B cell (primary cell): ENCODE measurements at regions of chr2 and their contacts with region 1.

Region 1: DNA sequence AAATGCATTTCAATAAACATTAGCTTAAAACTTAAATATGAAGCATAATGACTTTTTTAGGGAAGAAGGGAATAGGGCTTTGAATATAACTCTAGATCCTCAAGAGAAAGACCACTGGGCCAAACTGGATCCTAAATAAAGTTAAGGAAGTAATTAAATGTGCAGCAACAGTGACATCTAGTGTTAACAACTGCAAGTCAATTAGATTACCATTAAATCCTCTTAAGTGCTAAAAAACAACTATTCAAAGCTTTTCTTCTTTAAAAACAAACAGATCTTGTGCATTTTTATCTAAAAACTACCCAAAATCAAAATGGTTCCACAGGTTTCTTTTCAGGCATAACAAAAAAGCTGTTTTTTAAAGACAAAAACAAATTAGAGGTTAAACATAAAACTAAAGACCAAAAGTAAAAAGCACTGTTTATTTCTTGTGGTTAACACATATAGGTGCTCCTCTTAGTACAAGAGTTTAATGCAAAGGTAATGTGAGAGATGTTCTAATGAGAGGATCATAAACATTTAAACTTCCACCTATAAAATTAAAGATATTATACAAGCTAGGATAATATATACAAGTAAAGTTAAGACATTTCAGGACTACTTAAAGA is 111.4 kb downstream of the THADA start:
- DNase-seq: peak; percentile 80
- ATAC-seq: peak; percentile 54
- H3K4me3 ChIP-seq: no peak overlapping the region
- H3K4me3 Mint-ChIP-seq: no peak overlapping the region
- H3K27ac ChIP-seq: no peak overlapping the region
- H3K27ac Mint-ChIP-seq: no peak overlapping the region
- H3K4me1 ChIP-seq: peaks cover 21 to 24% of the 10 kb centered on the region in 2 donors
- H3K4me1 Mint-ChIP-seq: peaks cover 27% of the 10 kb centered on the region
- H3K27me3 ChIP-seq: no peaks in the 10 kb centered on the region
- H3K27me3 Mint-ChIP-seq: no peaks in the 10 kb centered on the region
- CTCF ChIP-seq: peak; percentile 93

Region 2: DNA sequence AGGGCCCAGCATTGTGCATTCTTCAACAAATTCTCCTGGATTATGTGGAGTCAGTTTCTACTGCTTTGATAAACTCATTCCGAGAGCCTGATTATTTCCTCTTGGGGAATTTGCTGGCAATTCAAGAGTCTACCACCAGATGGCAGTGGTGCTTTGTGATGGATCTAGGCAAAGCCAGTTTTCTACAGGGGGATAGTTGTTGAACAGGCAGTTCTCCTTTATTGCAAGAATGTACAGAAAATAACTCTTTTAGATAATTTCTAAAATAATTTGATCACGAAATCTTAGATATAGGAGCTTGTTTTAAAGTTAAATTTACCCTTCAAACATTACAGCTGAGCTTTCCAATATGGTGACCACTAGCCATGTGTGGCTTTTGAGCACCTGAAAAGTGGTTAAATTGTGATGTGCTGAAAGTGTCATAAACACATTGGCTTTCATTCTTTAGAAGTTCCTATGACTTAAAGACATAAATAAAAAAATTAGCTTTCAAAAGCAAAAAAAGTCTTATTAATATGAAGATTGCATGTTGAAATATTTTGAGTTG is 625.3 kb before region 1 on chr2:
- CTCF ChIA-PET with region 1: interaction called, 57 read pairs
- POLR2A ChIA-PET with region 1: no interaction called
- intact Hi-C with region 1: loop called (anchors 1 kb)
- DNase-seq: peak; percentile 72
- ATAC-seq: peak; percentile 53
- H3K4me3 ChIP-seq: no peak overlapping the region
- H3K4me3 Mint-ChIP-seq: no peak overlapping the region
- H3K27ac ChIP-seq: no peak overlapping the region
- H3K27ac Mint-ChIP-seq: no peak overlapping the region
- H3K4me1 ChIP-seq: no peaks in the 10 kb centered on the region
- H3K4me1 Mint-ChIP-seq: no peaks in the 10 kb centered on the region
- H3K27me3 ChIP-seq: no peaks in the 10 kb centered on the region
- H3K27me3 Mint-ChIP-seq: peaks cover 3% of the 10 kb centered on the region
- CTCF ChIP-seq: peak; percentile 92

Region 3: DNA sequence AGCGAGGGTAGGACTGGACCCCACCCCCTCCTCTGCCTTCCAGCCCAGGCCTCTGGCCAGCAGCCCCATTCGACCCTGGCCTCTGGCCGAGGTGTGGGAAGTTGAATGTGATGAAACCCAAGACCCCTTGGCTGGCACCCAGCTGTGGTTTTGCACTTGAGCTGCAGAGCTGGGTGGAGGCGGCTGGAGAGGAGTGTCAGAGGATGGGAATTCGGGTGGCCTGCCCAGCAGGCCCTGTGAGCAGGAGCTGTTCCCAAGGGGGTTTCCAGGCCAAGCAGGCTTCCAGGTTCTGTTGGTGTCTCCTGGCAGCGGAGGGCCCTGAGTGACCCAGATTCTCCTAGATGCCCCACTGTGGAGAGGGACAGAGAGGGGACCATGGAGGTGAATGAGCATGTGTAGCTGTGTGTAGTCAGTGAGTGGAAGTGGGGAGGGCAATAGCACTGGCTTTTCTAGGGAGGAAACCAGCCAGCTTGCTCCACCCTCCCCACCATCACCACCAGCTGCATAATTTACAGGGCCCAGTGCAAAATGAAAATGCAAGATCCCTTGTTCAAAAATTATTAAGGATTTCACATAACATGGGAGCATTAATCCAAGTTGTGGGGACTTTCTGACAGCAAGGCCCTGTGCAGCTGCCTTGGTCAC is 519.9 kb before region 1 on chr2:
- CTCF ChIA-PET with region 1: interaction called, 19 read pairs
- POLR2A ChIA-PET with region 1: no interaction called
- intact Hi-C with region 1: no loop called
- DNase-seq: no peak
- ATAC-seq: no peak
- H3K4me3 ChIP-seq: no peak overlapping the region
- H3K4me3 Mint-ChIP-seq: no peak overlapping the region
- H3K27ac ChIP-seq: no peak overlapping the region
- H3K27ac Mint-ChIP-seq: no peak overlapping the region
- H3K4me1 ChIP-seq: peaks cover 41 to 46% of the 10 kb centered on the region in 2 donors
- H3K4me1 Mint-ChIP-seq: peaks cover 30% of the 10 kb centered on the region
- H3K27me3 ChIP-seq: peaks cover 0 to 7% (median 0%) of the 10 kb centered on the region in 4 experiments
- H3K27me3 Mint-ChIP-seq: peaks cover 8% of the 10 kb centered on the region
- CTCF ChIP-seq: no peak

Region 4: GRCh38 chr2:43105586-43106558 is 378.6 kb before region 1 on chr2:
- CTCF ChIA-PET with region 1: interaction called, 7 read pairs
- POLR2A ChIA-PET with region 1: interaction called, 5 read pairs
- intact Hi-C with region 1: loop called (anchors 5 kb)
- DNase-seq: peak; percentile 78
- ATAC-seq: peak; percentile 65
- H3K4me3 ChIP-seq: no peak overlapping the region
- H3K4me3 Mint-ChIP-seq: peak overlapping the region; percentile 78
- H3K27ac ChIP-seq: peak overlapping the region; percentile 80 to 88
- H3K27ac Mint-ChIP-seq: peak overlapping the region; percentile 96
- H3K4me1 ChIP-seq: peaks cover 58 to 74% of the 10 kb centered on the region in 2 donors
- H3K4me1 Mint-ChIP-seq: peaks cover 61% of the 10 kb centered on the region
- H3K27me3 ChIP-seq: no peaks in the 10 kb centered on the region
- H3K27me3 Mint-ChIP-seq: no peaks in the 10 kb centered on the region
- CTCF ChIP-seq: peak; percentile 61

Region 5: GRCh38 chr2:43239981-43240761 is 244.3 kb before region 1 on chr2:
- CTCF ChIA-PET with region 1: interaction called, 16 read pairs
- POLR2A ChIA-PET with region 1: no interaction called
- intact Hi-C with region 1: no loop called
- DNase-seq: peak; percentile 59
- ATAC-seq: peak; percentile 87
- H3K4me3 ChIP-seq: peak overlapping the region in 1 of 5 experiments; percentile 17
- H3K4me3 Mint-ChIP-seq: peak overlapping the region; percentile 67
- H3K27ac ChIP-seq: peak overlapping the region; percentile 63 to 89
- H3K27ac Mint-ChIP-seq: peak overlapping the region; percentile 97
- H3K4me1 ChIP-seq: peaks cover 26 to 37% of the 10 kb centered on the region in 2 donors
- H3K4me1 Mint-ChIP-seq: peaks cover 48% of the 10 kb centered on the region
- H3K27me3 ChIP-seq: no peaks in the 10 kb centered on the region
- H3K27me3 Mint-ChIP-seq: no peaks in the 10 kb centered on the region
- CTCF ChIP-seq: no peak

Region 6: DNA sequence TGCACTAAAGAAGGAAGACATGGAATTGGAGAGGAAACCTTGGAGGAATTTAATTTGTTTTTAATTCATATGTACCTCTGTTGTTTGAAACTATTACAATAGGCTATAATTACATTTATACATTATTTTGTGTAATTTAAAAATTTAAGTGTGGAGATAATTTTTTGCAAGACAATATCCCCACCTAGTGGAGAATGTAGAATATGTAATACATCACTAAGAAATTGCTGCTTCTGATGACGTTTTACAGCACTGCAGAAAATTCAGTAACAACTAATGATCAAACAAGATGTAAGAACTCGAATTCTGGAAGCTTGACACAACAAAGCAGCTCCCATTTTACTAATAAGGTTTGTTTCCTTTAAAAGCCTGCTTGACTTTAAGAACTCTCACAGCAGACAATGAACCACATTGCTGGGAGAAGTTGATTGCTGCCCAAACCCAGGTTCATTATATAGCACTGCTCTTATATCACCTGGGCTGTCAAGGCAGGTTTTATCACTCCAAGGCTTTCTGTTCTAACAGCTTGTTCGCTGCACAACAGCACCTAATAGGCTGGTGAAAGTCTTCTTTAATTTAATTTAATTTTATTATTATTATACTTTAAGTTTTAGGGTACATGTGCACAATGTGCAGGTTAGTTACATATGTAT is 58.0 kb after region 1 on chr2:
- CTCF ChIA-PET with region 1: interaction called, 26 read pairs
- POLR2A ChIA-PET with region 1: no interaction called
- intact Hi-C with region 1: loop called (anchors 1 kb)
- DNase-seq: peak; percentile 67
- ATAC-seq: peak; percentile 49
- H3K4me3 ChIP-seq: no peak overlapping the region
- H3K4me3 Mint-ChIP-seq: no peak overlapping the region
- H3K27ac ChIP-seq: no peak overlapping the region
- H3K27ac Mint-ChIP-seq: no peak overlapping the region
- H3K4me1 ChIP-seq: peaks cover 12% of the 10 kb centered on the region in 2 donors
- H3K4me1 Mint-ChIP-seq: peaks cover 13% of the 10 kb centered on the region
- H3K27me3 ChIP-seq: no peaks in the 10 kb centered on the region
- H3K27me3 Mint-ChIP-seq: no peaks in the 10 kb centered on the region
- CTCF ChIP-seq: peak; percentile 84